ENCODE measurements at regions of chr7 and their contacts with region 1.

Region 1: GRCh38 chr7:21253740-21254687 is 173.9 kb upstream of the SP4 start:
- DNase-seq: peak in 6 of 9 experiments; percentile 15 to 60 (median 46)
- ATAC-seq: peak; percentile 49
- H3K4me3 ChIP-seq: no peak overlapping the region
- H3K4me3 Mint-ChIP-seq: peak overlapping the region; percentile 30
- H3K27ac ChIP-seq: no peak overlapping the region
- H3K27ac Mint-ChIP-seq: no peak overlapping the region
- H3K4me1 ChIP-seq: no peaks in the 10 kb centered on the region
- H3K4me1 Mint-ChIP-seq: peaks cover 6% of the 10 kb centered on the region
- H3K27me3 ChIP-seq: peaks cover 12 to 13% of the 10 kb centered on the region in 2 experiments
- H3K27me3 Mint-ChIP-seq: peaks cover 56% of the 10 kb centered on the region
- CTCF ChIP-seq: peak; percentile 42

Region 2: DNA sequence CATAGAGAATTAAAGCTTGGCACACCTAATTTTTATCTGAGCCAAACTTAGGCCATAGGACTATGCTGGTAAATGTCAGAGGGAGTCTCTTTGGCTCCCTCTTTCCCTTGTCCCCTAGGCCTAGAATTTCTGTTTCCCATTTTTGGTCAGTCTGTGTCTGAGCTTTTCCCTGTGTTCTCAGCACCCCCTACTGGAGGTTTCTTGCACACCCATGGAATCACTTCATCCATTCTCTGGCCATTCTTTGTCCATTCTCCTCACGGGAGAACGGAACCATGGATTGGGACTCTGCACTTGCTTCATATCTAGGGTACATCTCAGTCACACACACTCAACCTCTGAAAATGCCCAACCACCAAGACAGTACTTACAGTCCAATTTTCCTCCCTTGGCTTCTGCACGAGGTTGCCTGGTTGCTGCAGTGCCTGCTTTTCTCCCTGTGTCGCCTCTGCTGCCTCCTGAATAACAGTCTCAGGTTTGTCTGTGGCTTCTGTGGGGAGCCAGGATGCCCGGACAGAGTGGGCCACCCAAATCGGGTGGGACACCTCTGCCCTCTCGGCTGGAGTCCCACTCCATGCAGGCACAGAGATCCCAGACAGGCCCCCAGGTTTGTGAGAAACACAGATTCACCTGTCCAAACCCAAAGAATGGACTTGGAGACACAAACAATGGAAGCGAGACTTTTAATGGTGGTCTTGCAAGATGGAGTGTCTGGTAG is 253.8 kb after region 1 on chr7:
- CTCF ChIA-PET with region 1: interaction called, 18 read pairs
- POLR2A ChIA-PET with region 1: no interaction called
- intact Hi-C with region 1: loop called (anchors 1 kb)
- DNase-seq: peak in 4 of 9 experiments; percentile 17 to 54 (median 32)
- ATAC-seq: no peak
- H3K4me3 ChIP-seq: no peak overlapping the region
- H3K4me3 Mint-ChIP-seq: no peak overlapping the region
- H3K27ac ChIP-seq: no peak overlapping the region
- H3K27ac Mint-ChIP-seq: no peak overlapping the region
- H3K4me1 ChIP-seq: no peaks in the 10 kb centered on the region
- H3K4me1 Mint-ChIP-seq: no peaks in the 10 kb centered on the region
- H3K27me3 ChIP-seq: no peaks in the 10 kb centered on the region
- H3K27me3 Mint-ChIP-seq: no peaks in the 10 kb centered on the region
- CTCF ChIP-seq: peak; percentile 58

Region 3: DNA sequence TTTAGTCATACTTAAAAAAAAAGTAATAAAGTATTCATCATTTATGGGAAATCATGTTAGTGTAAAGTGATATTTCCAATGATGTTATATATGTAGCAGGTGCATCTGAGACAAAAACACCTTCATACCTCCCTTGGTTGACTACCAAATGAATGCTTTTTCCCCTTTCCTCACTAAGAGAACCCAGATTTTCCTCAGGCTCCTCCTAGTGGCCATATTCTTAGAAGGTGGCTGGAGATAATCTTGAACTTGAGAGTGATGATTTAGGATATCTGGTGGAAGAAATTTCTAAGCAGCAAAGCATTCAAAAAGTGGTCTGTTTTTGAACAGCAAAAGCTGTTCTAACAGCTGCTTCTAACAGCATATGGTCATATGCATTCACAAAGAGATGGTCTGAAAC is 272.0 kb after region 1 on chr7:
- CTCF ChIA-PET with region 1: no interaction called
- POLR2A ChIA-PET with region 1: no interaction called
- intact Hi-C with region 1: loop called in 1 of 2 experiments (anchors 5 kb)
- DNase-seq: peak in 2 of 9 experiments; percentile 33 to 43
- ATAC-seq: no peak
- H3K4me3 ChIP-seq: no peak overlapping the region
- H3K4me3 Mint-ChIP-seq: no peak overlapping the region
- H3K27ac ChIP-seq: no peak overlapping the region
- H3K27ac Mint-ChIP-seq: no peak overlapping the region
- H3K4me1 ChIP-seq: no peaks in the 10 kb centered on the region
- H3K4me1 Mint-ChIP-seq: no peaks in the 10 kb centered on the region
- H3K27me3 ChIP-seq: no peaks in the 10 kb centered on the region
- H3K27me3 Mint-ChIP-seq: peaks cover 3% of the 10 kb centered on the region
- CTCF ChIP-seq: peak; percentile 22

Region 4: DNA sequence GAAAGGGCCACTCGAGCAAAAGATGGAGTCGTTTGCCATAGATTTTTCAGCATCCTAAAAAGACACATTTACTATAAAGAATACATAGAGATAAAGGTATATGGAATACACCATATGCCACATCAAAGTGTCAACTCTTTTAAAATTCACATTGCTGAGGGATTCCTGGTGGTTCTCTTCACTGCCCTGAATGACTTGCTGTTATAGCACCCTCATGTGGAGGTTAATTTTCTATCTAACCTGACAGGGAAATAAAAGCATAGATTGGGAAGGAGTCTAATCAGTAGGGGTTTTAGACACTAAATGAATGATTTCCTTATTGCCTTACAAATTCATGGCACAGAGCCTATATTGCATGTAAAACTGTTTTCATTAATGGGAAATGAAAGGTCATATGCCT is 314.7 kb after region 1 on chr7:
- CTCF ChIA-PET with region 1: interaction called, 3 read pairs
- POLR2A ChIA-PET with region 1: no interaction called
- intact Hi-C with region 1: loop called in 1 of 2 experiments (anchors 2 kb)
- DNase-seq: peak in 2 of 9 experiments; percentile 6 to 36
- ATAC-seq: no peak
- H3K4me3 ChIP-seq: no peak overlapping the region
- H3K4me3 Mint-ChIP-seq: no peak overlapping the region
- H3K27ac ChIP-seq: no peak overlapping the region
- H3K27ac Mint-ChIP-seq: no peak overlapping the region
- H3K4me1 ChIP-seq: no peaks in the 10 kb centered on the region
- H3K4me1 Mint-ChIP-seq: no peaks in the 10 kb centered on the region
- H3K27me3 ChIP-seq: no peaks in the 10 kb centered on the region
- H3K27me3 Mint-ChIP-seq: no peaks in the 10 kb centered on the region
- CTCF ChIP-seq: peak; percentile 19

Region 5: GRCh38 chr7:21850531-21851285 is 596.7 kb after region 1 on chr7:
- CTCF ChIA-PET with region 1: no interaction called
- POLR2A ChIA-PET with region 1: no interaction called
- intact Hi-C with region 1: loop called in 1 of 2 experiments (anchors 10 kb)
- DNase-seq: no peak
- ATAC-seq: no peak
- H3K4me3 ChIP-seq: no peak overlapping the region
- H3K4me3 Mint-ChIP-seq: no peak overlapping the region
- H3K27ac ChIP-seq: peak overlapping the region in 1 of 2 experiments; percentile 47
- H3K27ac Mint-ChIP-seq: peak overlapping the region; percentile 94
- H3K4me1 ChIP-seq: peaks cover 21% of the 10 kb centered on the region
- H3K4me1 Mint-ChIP-seq: peaks cover 29% of the 10 kb centered on the region
- H3K27me3 ChIP-seq: no peaks in the 10 kb centered on the region
- H3K27me3 Mint-ChIP-seq: no peaks in the 10 kb centered on the region
- CTCF ChIP-seq: no peak

Region 6: GRCh38 chr7:22001345-22002004 is 747.5 kb after region 1 on chr7:
- CTCF ChIA-PET with region 1: interaction called, 9 read pairs
- POLR2A ChIA-PET with region 1: no interaction called
- intact Hi-C with region 1: loop called (anchors 1 to 2 kb)
- DNase-seq: peak in 3 of 9 experiments; percentile 27 to 65 (median 57)
- ATAC-seq: peak; percentile 72
- H3K4me3 ChIP-seq: no peak overlapping the region
- H3K4me3 Mint-ChIP-seq: peak overlapping the region; percentile 23
- H3K27ac ChIP-seq: no peak overlapping the region
- H3K27ac Mint-ChIP-seq: no peak overlapping the region
- H3K4me1 ChIP-seq: no peaks in the 10 kb centered on the region
- H3K4me1 Mint-ChIP-seq: peaks cover 3% of the 10 kb centered on the region
- H3K27me3 ChIP-seq: no peaks in the 10 kb centered on the region
- H3K27me3 Mint-ChIP-seq: peaks cover 9% of the 10 kb centered on the region
- CTCF ChIP-seq: peak; percentile 86